ENCODE measurements at regions of chr4 and their contacts with region 1.

Region 1: GRCh38 chr4:7939377-7940108 is at the start of gene AFAP1:
- DNase-seq: peak; percentile 97
- CTCF ChIP-seq: no peak

Region 2: DNA sequence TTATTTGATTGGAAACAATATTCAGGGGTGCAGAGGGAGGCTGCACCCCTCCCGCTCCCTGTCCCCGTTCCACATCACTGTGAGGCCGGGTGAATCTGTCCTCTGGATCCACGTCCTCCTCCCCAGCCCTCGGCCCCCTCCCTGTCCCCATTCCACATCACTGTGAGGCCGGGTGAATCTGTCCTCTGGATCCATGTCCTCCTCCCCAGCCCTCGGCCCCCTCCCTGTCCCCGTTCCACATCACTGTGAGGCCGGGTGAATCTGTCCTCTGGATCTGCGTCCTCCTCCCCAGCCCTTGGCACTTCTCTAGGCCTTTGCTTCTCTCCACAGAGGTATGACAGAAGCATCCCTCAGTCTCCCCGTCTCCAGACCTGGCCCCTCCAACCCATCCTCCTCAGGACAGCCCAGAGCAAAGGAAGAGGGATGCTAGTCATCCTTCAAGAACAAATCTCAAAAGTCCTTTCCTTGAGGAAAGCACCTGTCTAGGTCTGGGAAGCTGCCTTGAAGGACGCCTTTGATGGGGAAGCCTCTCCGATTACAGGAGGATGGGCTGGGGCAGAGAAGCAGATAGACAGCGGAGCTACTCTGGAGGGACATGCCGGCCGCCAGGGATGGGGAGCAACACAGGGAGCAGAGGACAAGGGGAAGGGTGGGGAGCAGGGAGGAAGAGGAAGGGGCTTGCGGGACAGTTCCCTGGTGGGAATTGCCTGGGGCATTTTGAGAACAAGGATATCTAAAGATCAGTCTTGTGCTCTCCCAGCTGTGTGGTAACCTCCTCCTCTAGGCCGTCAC is 11.0 kb after region 1 on chr4:
- CTCF ChIA-PET with region 1: no interaction called
- POLR2A ChIA-PET with region 1: no interaction called
- DNase-seq: no peak
- CTCF ChIP-seq: no peak

Region 3: DNA sequence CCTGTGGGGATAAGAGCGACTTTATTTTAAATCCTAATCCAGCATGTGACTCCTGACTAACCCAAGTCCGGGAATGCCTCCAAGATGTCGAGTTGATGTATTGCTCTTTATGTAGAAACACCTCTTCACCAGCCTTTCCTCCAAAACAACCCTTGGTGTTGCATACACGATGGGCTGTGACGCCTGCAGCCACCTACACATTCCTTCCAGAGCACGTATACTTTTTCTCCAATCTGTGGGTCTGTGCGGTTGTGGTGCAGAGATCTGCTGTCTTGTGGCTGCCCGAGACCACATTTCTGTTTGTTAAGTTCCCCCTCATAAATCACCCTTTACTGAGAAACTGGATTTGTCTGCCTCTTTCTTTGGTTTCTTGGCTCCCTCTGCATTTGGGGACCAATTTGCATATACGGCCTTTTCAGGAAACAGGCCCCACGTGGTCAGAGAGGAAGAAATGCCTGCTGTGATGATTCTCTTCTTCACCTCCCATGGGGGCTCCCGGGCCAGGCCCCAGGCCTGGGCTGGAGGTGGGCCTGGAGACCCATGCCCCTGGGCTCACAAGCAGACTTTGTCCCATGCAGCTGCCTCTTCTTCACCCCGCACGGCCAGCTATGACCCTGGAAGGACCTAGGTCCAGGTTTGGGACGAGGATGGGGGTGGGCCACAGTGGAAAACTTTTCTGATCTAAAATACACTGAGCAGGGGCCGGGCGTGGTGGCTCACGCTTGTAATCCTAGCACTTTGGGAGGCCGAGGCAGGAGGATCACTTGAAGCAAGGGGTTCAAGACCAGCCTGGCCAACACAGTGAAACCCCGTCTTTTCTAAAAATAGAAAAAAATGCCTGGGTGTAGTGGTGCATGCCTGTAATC is 21.5 kb after region 1 on chr4:
- CTCF ChIA-PET with region 1: interaction called, 12 read pairs
- POLR2A ChIA-PET with region 1: no interaction called
- DNase-seq: peak; percentile 63
- CTCF ChIP-seq: no peak